ENCODE measurements at regions of chr4 and their contacts with region 1.

Region 1: GRCh38 chr4:38062088-38062893 is 102.1 kb downstream of the PTTG2 start:
- DNase-seq: peak; percentile 72
- ATAC-seq: peak; percentile 78
- H3K4me3 Mint-ChIP-seq: peak overlapping the region; percentile 29
- H3K27ac Mint-ChIP-seq: peak overlapping the region; percentile 14
- H3K4me1 Mint-ChIP-seq: peaks cover 16% of the 10 kb centered on the region
- H3K27me3 Mint-ChIP-seq: no peaks in the 10 kb centered on the region

Region 2: DNA sequence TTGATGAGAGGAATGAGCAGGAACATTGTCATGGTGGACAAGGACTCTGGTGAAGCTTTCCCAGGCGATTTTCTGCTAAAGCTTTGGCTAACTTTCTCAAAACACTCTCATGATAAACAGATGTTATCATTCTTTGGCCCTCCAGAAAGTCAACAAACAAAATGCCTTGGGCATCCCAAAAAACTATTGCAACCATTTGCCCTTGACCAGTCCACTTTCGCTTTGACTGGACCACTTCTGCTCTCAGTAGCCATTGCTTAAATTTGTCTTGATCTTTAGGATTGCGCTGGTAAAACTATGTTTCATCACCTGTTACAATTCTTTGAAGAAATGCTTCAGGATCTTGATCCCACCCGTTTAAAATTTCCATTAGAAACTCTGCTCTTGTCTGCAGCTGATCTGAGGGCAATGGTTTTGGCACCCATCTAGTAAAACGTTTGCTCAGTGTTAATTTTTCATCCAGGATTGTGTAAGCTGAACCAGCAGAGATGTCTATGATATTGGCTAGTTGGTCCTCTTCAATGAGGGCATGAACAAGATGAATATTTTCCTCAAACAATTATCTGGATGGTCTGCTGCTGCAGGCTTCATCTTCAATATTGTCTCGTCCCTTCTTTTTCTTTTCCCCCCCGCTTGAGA is 156.6 kb before region 1 on chr4:
- CTCF ChIA-PET with region 1: no interaction called
- DNase-seq: no peak
- ATAC-seq: no peak
- H3K4me3 Mint-ChIP-seq: no peak overlapping the region
- H3K27ac Mint-ChIP-seq: no peak overlapping the region
- H3K4me1 Mint-ChIP-seq: peaks cover 10% of the 10 kb centered on the region
- H3K27me3 Mint-ChIP-seq: no peaks in the 10 kb centered on the region

Region 3: GRCh38 chr4:38132107-38132673 is 69.9 kb after region 1 on chr4:
- CTCF ChIA-PET with region 1: interaction called, 10 read pairs
- DNase-seq: peak; percentile 92
- ATAC-seq: peak; percentile 69
- H3K4me3 Mint-ChIP-seq: peak overlapping the region; percentile 54
- H3K27ac Mint-ChIP-seq: peak overlapping the region; percentile 84
- H3K4me1 Mint-ChIP-seq: peaks cover 78% of the 10 kb centered on the region
- H3K27me3 Mint-ChIP-seq: peaks cover 5% of the 10 kb centered on the region